Activated CD8-positive, alpha-beta T cell treated with anti-CD3 and anti-CD28 coated beads for 36 hours (primary cell): ENCODE measurements at regions of chr6 and their contacts with region 1.

Region 1: GRCh38 chr6:42901536-42901957 is 14.3 kb upstream of the PTCRA start:
- DNase-seq: peak; percentile 79
- ATAC-seq: peak; percentile 100
- H3K4me3 Mint-ChIP-seq: peak overlapping the region; percentile 41
- H3K27ac Mint-ChIP-seq: peak overlapping the region; percentile 13
- H3K4me1 Mint-ChIP-seq: peaks cover 14% of the 10 kb centered on the region
- H3K27me3 Mint-ChIP-seq: no peaks in the 10 kb centered on the region
- CTCF ChIP-seq: peak; percentile 86

Region 2: DNA sequence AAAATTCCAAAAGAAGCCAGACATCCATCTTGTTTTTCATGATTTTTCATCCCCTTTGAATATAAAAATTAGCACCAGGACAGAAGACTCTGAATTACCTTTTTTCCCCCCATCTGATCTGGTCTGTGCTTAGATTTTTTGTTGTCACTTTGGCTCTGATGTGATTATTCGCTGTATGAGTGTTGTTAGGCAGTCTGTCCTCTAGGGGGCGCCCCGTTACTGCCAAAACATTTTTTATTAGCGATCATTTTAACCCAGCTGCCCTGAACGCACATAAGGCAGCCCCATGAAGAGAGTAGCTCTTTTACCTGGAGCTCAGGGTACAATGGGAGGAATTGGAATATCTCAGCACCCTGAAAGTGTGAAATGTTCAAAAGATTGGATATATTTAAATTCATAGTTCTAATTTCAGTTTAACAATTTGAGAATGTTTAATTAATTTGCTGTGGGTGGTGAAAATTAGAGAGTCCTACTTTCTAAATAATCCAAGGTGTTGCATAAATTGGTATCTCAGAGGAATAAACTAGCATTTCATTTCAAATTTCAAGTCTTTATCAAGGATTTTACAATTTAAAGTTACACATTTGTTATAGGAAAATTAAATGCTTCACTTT is 239.9 kb before region 1 on chr6:
- CTCF ChIA-PET with region 1: interaction called, 5 read pairs
- POLR2A ChIA-PET with region 1: no interaction called
- intact Hi-C with region 1: loop called (anchors 5 kb)
- DNase-seq: peak; percentile 93
- ATAC-seq: peak; percentile 91
- H3K4me3 Mint-ChIP-seq: no peak overlapping the region
- H3K27ac Mint-ChIP-seq: peak overlapping the region; percentile 37
- H3K4me1 Mint-ChIP-seq: no peaks in the 10 kb centered on the region
- H3K27me3 Mint-ChIP-seq: no peaks in the 10 kb centered on the region
- CTCF ChIP-seq: peak; percentile 91

Region 3: DNA sequence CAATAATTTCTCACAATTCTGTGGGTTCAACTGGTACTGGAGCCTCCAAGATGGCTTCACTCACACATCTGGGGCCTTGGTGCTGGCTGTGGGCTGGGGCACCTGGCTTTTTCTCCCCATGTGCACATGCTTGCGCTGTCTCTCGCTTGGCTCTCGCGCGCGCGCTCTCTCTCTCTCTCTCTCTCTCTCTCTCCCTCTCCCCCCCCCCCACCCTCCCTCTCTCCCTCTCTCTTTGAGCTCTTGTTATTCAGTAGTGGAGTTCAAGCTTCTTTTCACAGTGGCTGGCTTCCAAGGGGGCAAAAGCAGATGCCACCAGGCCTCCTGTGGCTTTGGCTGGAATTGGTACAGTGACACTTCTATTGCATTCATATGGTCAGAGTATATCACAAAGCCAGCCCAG is 144.8 kb before region 1 on chr6:
- CTCF ChIA-PET with region 1: no interaction called
- POLR2A ChIA-PET with region 1: no interaction called
- intact Hi-C with region 1: no loop called
- DNase-seq: no peak
- ATAC-seq: no peak
- H3K4me3 Mint-ChIP-seq: no peak overlapping the region
- H3K27ac Mint-ChIP-seq: no peak overlapping the region
- H3K4me1 Mint-ChIP-seq: peaks cover 4% of the 10 kb centered on the region
- H3K27me3 Mint-ChIP-seq: no peaks in the 10 kb centered on the region
- CTCF ChIP-seq: no peak

Region 4: DNA sequence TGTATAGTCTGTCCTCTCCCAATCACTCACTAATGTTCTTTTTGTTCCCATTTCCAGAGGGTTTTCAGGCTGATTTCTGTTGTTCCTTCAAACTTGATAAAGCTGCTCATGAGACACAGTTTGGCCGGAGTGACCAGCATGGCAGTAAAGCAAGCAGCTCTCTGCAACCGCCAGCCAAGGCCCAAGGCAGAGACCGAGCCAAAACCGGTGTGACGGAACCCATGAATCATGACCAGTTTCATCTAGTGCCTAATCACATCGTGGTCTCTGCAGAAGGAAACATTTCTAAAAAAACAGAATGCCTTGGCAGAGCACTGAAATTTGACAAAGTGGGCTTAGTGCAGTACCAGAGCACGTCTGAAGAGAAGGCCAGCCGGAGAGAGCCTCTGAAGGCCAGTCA is 36.9 kb before region 1 on chr6:
- CTCF ChIA-PET with region 1: no interaction called
- POLR2A ChIA-PET with region 1: no interaction called
- intact Hi-C with region 1: no loop called
- DNase-seq: peak; percentile 18
- ATAC-seq: no peak
- H3K4me3 Mint-ChIP-seq: no peak overlapping the region
- H3K27ac Mint-ChIP-seq: peak overlapping the region; percentile 45
- H3K4me1 Mint-ChIP-seq: no peaks in the 10 kb centered on the region
- H3K27me3 Mint-ChIP-seq: no peaks in the 10 kb centered on the region
- CTCF ChIP-seq: no peak

Region 5: DNA sequence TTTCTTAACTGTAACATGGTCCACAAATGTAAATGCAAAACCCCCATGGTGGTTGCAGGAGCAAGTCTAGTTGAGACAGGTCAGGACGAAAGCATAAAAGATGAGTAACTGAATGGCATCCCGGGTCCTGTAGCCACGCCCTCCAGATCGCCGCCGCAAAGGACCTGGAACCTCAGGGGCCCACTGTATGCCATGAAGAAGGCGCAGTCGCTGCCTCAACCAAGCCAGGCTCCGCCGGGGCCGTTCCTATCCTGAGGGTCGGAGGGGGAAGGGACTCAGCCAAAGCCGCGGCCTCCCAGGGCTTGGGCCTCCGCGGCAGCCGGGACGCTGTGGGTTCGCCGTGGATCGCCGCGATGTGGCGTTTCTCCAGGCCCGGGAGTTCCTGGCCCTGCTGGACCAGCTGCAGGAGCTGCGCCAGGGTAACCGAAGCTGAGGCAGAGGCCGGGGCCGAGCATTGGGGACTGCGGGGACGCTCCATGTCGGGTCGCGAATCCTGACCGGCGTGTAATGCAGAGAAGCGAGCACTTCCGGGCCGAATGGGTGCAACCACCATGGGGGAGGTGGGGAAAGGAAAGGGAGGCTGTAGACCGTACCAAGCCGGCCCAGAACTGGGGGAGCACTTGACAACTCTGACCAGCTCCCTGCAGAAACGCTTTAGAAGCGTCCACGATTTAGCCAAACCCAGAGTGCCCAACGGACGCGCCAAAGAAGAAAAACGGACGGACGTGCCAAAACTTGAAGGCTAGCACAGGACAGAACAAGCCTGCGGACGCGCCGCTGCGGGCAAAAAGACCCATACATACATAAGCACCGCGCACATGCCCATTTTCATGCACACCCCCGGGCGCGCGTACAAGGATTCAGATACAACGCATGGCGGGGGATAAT is 11.0 kb before region 1 on chr6:
- CTCF ChIA-PET with region 1: interaction called, 20 read pairs
- POLR2A ChIA-PET with region 1: no interaction called
- intact Hi-C with region 1: no loop called
- DNase-seq: peak; percentile 96
- ATAC-seq: peak; percentile 93
- H3K4me3 Mint-ChIP-seq: peak overlapping the region; percentile 79
- H3K27ac Mint-ChIP-seq: peak overlapping the region; percentile 92
- H3K4me1 Mint-ChIP-seq: peaks cover 28% of the 10 kb centered on the region
- H3K27me3 Mint-ChIP-seq: no peaks in the 10 kb centered on the region
- CTCF ChIP-seq: no peak

Region 6: GRCh38 chr6:43059168-43060033 is 157.9 kb after region 1 on chr6 and contains the starts of genes KLC4 and MRPL2:
- CTCF ChIA-PET with region 1: no interaction called
- POLR2A ChIA-PET with region 1: interaction called, 3 read pairs
- intact Hi-C with region 1: loop called (anchors 10 kb)
- DNase-seq: peak; percentile 99
- ATAC-seq: peak; percentile 98
- H3K4me3 Mint-ChIP-seq: peak within 1 kb of the TSS; percentile 81
- H3K27ac Mint-ChIP-seq: peak within 1 kb of the TSS; percentile 92
- H3K4me1 Mint-ChIP-seq: peaks cover 37% of the 10 kb centered on the region
- H3K27me3 Mint-ChIP-seq: no peaks in the 10 kb centered on the region
- CTCF ChIP-seq: no peak
- total RNA-seq, gene KLC4: 10.6 to 11.5 TPM
- total RNA-seq, gene MRPL2: 108 TPM